Caco-2 (cell line): ENCODE measurements at regions of chr16 and their contacts with region 1.

Region 1: GRCh38 chr16:46883690-46884512 is at the start of gene GPT2:
- DNase-seq: peak; percentile 97 to 99
- H3K4me3 ChIP-seq: peak within 1 kb of the TSS; percentile 95
- H3K4me3 Mint-ChIP-seq: peak within 1 kb of the TSS; percentile 94
- H3K27ac Mint-ChIP-seq: peak within 1 kb of the TSS; percentile 97
- H3K4me1 ChIP-seq: peaks cover 57% of the 10 kb centered on the region
- H3K4me1 Mint-ChIP-seq: peaks cover 44% of the 10 kb centered on the region
- H3K27me3 ChIP-seq: no peaks in the 10 kb centered on the region
- H3K27me3 Mint-ChIP-seq: no peaks in the 10 kb centered on the region
- CTCF ChIP-seq: no peak
- total RNA-seq, gene GPT2: 128 and 142 TPM in 2 replicates

Region 2: DNA sequence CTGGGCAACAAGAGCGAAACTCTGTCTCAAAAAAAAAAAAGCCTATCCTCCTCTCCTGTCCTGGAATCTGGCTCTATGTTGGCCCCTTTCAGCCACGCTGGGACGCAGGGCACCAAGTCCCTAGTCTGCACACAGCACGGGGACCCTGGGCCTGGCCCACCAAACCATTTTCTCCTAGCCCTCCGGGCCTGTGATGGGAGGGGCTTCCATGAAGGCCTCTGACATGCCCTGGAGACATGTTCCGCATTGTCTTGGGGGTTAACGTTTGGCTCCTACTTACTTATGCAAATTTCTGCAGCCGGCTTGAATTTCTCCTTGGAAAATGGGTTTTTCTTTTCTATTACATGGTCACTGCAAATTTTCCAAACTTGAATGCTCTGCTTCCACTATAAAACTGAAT is 12.3 kb before region 1 on chr16:
- CTCF ChIA-PET with region 1: interaction called, 7 read pairs
- POLR2A ChIA-PET with region 1: interaction called, 8 read pairs
- intact Hi-C with region 1: loop called (anchors 1 kb)
- DNase-seq: no peak
- H3K4me3 ChIP-seq: no peak overlapping the region
- H3K4me3 Mint-ChIP-seq: no peak overlapping the region
- H3K27ac Mint-ChIP-seq: no peak overlapping the region
- H3K4me1 ChIP-seq: peaks cover 20% of the 10 kb centered on the region
- H3K4me1 Mint-ChIP-seq: peaks cover 19% of the 10 kb centered on the region
- H3K27me3 ChIP-seq: no peaks in the 10 kb centered on the region
- H3K27me3 Mint-ChIP-seq: no peaks in the 10 kb centered on the region
- CTCF ChIP-seq: no peak

Region 3: DNA sequence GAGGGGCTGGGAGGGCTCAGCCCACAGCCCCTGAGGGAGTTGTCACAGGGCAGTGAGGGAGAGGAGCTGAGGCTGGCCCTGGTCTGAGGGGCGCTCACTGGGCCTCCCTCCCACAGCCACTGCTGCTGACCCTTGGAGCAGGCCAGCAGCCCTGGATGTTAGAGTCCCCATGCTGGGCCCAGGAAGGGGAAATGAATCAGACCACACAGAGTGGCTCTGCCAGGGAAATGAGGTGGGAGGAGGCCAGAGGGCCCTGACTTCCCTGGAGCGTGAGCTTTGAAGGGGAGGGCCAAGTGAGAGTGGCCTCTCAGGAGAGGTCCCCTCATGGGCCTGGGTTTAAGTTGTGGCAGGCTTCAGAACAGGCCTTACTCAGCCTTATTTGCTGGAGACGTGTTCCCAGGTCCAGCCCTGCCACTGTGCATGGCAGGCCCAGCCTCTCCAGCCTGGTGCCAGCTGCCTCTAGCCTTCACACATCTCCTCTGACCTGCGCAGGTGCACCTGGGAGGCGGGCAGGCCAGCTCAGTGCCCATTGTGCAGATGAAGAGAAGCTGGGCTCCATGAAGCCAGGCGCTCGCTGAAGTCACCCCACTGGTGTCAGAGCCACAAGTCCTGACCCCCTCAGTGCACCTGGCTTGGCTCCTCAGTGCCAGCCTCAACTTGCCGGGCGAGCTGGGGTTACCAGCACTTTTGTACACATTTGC is 15.7 kb after region 1 on chr16:
- CTCF ChIA-PET with region 1: interaction called, 5 read pairs
- POLR2A ChIA-PET with region 1: interaction called, 3 read pairs
- intact Hi-C with region 1: loop called (anchors 1 kb)
- DNase-seq: no peak
- H3K4me3 ChIP-seq: no peak overlapping the region
- H3K4me3 Mint-ChIP-seq: no peak overlapping the region
- H3K27ac Mint-ChIP-seq: no peak overlapping the region
- H3K4me1 ChIP-seq: peaks cover 18% of the 10 kb centered on the region
- H3K4me1 Mint-ChIP-seq: peaks cover 8% of the 10 kb centered on the region
- H3K27me3 ChIP-seq: no peaks in the 10 kb centered on the region
- H3K27me3 Mint-ChIP-seq: no peaks in the 10 kb centered on the region
- CTCF ChIP-seq: no peak

Region 4: GRCh38 chr16:46908540-46909372 is 24.9 kb after region 1 on chr16:
- CTCF ChIA-PET with region 1: interaction called, 6 read pairs
- POLR2A ChIA-PET with region 1: no interaction called
- intact Hi-C with region 1: loop called (anchors 1 kb)
- DNase-seq: peak; percentile 68 to 73
- H3K4me3 ChIP-seq: no peak overlapping the region
- H3K4me3 Mint-ChIP-seq: no peak overlapping the region
- H3K27ac Mint-ChIP-seq: no peak overlapping the region
- H3K4me1 ChIP-seq: peaks cover 6% of the 10 kb centered on the region; the same call in 1 of the 2 replicates
- H3K4me1 Mint-ChIP-seq: peaks cover 6% of the 10 kb centered on the region
- H3K27me3 ChIP-seq: no peaks in the 10 kb centered on the region
- H3K27me3 Mint-ChIP-seq: no peaks in the 10 kb centered on the region
- CTCF ChIP-seq: peak; percentile 69 to 77

Region 5: DNA sequence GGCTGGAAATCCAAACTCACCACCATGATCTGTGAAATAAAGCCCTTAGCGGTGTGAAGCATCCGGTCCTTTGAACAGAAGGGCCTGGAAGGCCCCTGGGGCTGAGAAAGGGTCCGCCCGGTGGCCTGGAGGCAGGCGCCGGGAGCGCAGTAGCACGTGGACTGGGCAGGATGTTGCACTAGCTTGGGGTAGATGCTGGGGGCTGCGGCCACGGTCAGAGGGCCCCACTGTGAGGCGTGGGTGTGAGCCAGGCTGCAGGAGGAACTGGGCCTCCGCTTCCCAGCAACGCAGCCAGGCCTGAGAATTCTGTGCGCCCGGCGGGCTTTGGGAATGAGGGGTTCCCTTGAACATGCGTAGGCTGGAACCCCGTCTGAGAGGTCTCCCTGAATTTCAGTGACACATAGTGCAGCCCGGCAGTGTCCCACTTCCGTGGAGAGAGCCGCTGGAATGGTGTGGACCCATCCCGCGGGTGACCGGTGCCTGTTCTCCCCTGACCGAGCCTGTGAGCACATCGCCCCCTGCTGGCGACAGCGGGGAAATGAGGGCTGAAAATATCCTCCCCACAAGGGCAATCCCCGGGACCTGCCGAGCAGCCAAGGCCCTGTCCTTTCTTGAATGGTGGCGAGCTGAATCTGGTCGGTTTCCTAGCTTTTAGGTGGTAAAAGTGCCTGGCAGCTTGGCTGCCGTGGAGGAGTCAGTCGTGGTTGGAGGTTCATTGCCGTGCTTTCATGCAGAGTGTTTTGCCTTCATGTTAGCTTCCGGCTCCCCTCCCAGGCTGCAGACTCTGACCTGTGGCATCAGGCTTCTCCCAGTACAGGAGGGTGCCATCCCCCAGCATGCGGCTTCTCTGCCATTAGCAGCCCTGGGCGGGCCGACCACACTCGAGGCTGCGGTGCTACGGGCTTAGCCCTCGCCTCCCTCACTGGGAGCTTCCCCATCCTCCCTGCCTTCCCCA is 45.8 kb after region 1 on chr16:
- CTCF ChIA-PET with region 1: no interaction called
- POLR2A ChIA-PET with region 1: no interaction called
- intact Hi-C with region 1: no loop called
- DNase-seq: peak in 1 of 2 experiments; percentile 74
- H3K4me3 ChIP-seq: no peak overlapping the region
- H3K4me3 Mint-ChIP-seq: no peak overlapping the region
- H3K27ac Mint-ChIP-seq: peak overlapping the region; percentile 72
- H3K4me1 ChIP-seq: no peaks in the 10 kb centered on the region
- H3K4me1 Mint-ChIP-seq: peaks cover 6% of the 10 kb centered on the region
- H3K27me3 ChIP-seq: no peaks in the 10 kb centered on the region
- H3K27me3 Mint-ChIP-seq: no peaks in the 10 kb centered on the region
- CTCF ChIP-seq: peak; percentile 71 to 82

Region 6: GRCh38 chr16:47037746-47038458 is 154.0 kb after region 1 on chr16:
- CTCF ChIA-PET with region 1: no interaction called
- POLR2A ChIA-PET with region 1: no interaction called
- intact Hi-C with region 1: no loop called
- DNase-seq: peak; percentile 84 to 93
- H3K4me3 ChIP-seq: peak overlapping the region; percentile 69
- H3K4me3 Mint-ChIP-seq: peak overlapping the region; percentile 75
- H3K27ac Mint-ChIP-seq: no peak overlapping the region
- H3K4me1 ChIP-seq: no peaks in the 10 kb centered on the region
- H3K4me1 Mint-ChIP-seq: no peaks in the 10 kb centered on the region
- H3K27me3 ChIP-seq: no peaks in the 10 kb centered on the region
- H3K27me3 Mint-ChIP-seq: peaks cover 2% of the 10 kb centered on the region
- CTCF ChIP-seq: peak; percentile 87 to 92

Region 7: DNA sequence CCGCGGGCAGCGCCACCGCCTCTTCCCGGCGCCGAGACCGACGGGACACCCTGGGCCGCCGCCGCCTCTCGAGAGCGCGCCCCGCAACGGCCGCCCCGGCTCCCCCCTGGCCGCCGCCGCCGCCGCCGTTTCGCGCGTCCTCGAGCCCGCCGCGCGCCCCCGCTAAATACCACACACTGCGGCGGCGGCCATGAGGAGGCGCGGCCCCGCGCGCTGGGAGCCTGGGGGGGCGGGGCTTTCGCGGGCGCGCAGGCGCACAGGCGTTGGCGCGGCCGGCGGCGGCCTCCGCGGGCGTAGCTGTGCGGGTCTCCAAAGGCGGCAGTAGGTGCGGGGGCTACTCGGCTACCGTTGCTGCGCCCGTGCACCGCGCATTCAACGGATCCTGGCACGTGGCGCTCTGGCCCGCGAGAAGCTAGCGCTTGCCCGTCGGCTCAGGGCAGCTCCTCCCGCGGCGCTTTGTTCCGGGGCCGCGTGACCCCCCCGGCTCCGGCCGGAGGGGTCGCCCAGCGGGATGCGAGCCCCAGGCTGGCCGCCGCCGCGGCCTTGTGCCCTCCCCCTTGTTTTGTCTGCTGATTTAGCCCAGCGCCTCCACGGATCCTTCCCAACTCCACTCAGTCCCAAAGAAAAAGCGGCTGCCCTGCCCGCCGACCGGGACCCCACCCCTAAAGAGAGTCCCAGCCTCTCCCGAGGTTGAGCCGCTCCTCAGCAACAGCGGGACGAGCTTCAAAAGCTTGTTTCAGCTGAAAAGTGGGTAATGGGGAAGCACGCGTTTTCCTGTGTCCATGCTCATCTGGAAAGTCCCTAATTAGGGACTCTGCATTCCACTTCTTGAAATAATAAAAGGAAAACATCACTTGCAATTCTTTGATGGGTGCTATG is 1501.6 kb after region 1 on chr16 and contains the start of gene SIAH1:
- CTCF ChIA-PET with region 1: no interaction called
- POLR2A ChIA-PET with region 1: no interaction called
- intact Hi-C with region 1: loop called (anchors 10 kb)
- DNase-seq: peak; percentile 75 to 92
- H3K4me3 ChIP-seq: peak within 1 kb of the TSS; percentile 68
- H3K4me3 Mint-ChIP-seq: peak within 1 kb of the TSS; percentile 94
- H3K27ac Mint-ChIP-seq: peak within 1 kb of the TSS; percentile 96
- H3K4me1 ChIP-seq: peaks cover 10% of the 10 kb centered on the region; the same call in 1 of the 2 replicates
- H3K4me1 Mint-ChIP-seq: peaks cover 15% of the 10 kb centered on the region
- H3K27me3 ChIP-seq: no peaks in the 10 kb centered on the region
- H3K27me3 Mint-ChIP-seq: no peaks in the 10 kb centered on the region
- CTCF ChIP-seq: no peak
- total RNA-seq, gene SIAH1: 26.6 and 27.2 TPM in 2 replicates